Breast epithelium (tissue), 4 donors: ENCODE measurements at regions of chr20 and their contacts with region 1.

Region 1: DNA sequence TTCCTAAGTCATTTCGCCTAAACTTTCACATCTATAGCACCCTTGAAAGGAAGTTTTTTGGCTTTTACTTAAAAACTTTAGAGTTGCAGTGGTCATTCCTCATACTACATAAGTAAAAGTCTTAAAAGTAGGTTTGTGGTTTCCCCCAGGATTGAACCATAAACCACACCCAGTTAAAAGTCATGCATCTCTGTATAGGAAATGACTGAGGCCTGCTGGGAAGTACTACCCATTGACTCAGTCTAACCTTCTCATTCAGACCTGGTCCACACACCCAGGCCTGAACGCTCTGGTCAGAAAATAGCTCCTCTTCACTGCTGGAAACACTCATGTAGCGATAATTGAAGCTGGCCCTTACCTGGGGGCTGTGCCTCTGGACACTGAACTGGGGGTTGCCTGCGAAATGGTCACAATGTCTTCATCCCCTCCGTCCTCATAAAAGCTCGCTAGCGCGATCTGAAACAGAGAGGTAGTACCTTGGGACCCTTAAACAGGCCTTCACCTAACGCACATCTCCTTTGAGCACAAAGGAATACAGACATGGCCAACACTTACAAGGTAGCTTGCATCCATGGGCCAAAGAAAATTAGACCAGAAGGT is 2.6 kb downstream of the NSFL1C start:
- DNase-seq: no peak
- H3K4me3 ChIP-seq: no peak overlapping the region
- H3K27ac ChIP-seq: no peak overlapping the region
- H3K4me1 ChIP-seq: peaks cover 9 to 11% of the 10 kb centered on the region in 2 donors
- H3K27me3 ChIP-seq: no peaks in the 10 kb centered on the region
- CTCF ChIP-seq: no peak
- POLR2A ChIP-seq: no peak

Region 2: DNA sequence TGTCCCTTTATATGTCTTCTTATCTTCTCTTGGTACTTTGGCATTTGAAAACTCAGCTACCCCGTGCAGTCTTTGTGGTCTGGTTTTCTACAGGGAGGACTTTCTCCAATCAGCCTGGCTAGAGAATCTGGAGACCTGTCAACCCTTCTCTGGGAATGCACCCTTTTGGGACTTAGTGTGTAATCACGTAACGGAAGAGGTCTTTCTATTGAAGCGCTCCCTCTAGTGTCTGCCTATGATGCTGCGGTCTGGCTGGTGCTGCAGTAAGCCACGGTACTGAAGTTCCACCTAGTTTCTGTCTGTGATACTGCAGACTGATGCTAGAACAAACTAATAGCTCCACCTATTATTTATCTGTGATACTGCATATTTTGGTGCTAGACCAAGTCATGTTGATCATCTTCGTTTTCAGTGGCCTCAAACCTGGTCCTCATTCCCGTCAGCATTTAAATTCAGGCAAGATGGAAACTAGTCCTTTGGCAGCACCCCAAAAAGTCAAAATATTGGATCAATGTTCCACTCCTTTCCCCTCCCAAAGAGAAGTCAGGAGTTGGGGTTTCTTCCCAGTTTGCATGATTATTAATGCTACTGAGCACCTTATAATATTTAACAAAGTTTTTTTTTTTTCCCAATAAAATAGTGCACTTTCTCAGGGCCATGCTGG is 39.6 kb after region 1 on chr20:
- intact Hi-C with region 1: no loop called
- DNase-seq: peak in 1 of 2 donors; percentile 63
- H3K4me3 ChIP-seq: no peak overlapping the region
- H3K27ac ChIP-seq: no peak overlapping the region
- H3K4me1 ChIP-seq: no peaks in the 10 kb centered on the region
- H3K27me3 ChIP-seq: no peaks in the 10 kb centered on the region
- CTCF ChIP-seq: peak; percentile 66 to 89 (median 82)
- POLR2A ChIP-seq: no peak

Region 3: GRCh38 chr20:2133318-2134183 is 669.5 kb after region 1 on chr20:
- intact Hi-C with region 1: loop called (anchors 5 kb)
- DNase-seq: no peak
- H3K4me3 ChIP-seq: no peak overlapping the region
- H3K27ac ChIP-seq: peak overlapping the region in 1 of 2 donors; percentile 52
- H3K4me1 ChIP-seq: peaks cover 14 to 27% of the 10 kb centered on the region in 2 donors
- H3K27me3 ChIP-seq: no peaks in the 10 kb centered on the region
- CTCF ChIP-seq: no peak
- POLR2A ChIP-seq: no peak